Activated CD8-positive, alpha-beta T cell treated with anti-CD3 and anti-CD28 coated beads, Interleukin-2, amount 10 ng/mL, durations not matched to agents 7 days and 5 days (primary cell): ENCODE measurements at regions of chr5 and their contacts with region 1.

Region 1: DNA sequence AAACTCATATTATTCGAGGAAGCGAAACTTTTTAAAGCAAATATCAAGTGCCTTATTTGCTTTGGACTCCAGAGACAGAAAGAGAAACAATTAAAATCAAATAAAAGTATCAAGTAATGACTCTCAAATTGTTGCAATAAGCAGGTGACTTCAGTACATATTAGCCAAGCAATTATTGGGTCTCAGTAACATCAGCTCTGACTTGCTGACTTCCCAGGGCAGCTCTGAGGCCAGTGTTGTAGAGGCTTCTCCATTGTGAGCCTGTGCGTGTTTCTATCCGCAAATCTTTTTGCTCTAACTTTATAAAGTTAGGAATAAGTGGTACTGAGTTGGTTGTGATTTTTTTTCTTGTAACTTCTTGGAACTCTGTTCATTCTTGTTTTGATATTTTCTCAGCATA is 186.8 kb upstream of the PRLR start:
- DNase-seq: no peak
- ATAC-seq: no peak
- H3K4me3 Mint-ChIP-seq: no peak overlapping the region
- H3K27ac Mint-ChIP-seq: no peak overlapping the region
- H3K4me1 Mint-ChIP-seq: no peaks in the 10 kb centered on the region
- H3K27me3 Mint-ChIP-seq: no peaks in the 10 kb centered on the region

Region 2: DNA sequence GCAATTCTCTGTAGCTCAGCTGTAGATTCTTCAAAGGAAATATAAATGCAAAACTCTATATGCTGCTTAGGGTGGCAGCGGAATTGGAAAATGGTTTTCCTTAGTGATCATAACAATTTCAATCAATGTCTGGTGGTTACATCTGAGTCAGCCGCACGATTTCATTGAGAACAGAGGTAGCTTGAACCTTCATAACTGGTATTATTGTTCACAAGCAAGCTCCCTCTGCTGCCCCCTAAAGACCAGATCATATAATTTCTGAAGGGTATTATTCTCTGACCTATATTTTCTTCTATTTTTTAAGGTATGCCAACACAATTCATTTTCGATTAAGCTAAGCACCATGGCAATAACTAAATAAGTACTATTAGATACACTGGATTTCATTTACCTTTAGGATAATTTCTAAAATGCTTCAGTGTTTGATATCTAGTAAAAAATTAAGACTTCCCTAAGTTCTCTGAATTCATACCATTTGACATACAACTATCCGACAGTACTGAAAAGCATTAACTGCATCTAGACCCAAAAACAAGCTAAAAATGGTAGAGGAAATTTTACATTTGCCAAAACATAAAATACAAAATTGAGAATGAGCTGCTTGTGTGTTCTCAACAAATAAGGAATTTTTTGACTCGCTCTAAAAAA is 19.5 kb after region 1 on chr5:
- CTCF ChIA-PET with region 1: interaction called, 11 read pairs
- POLR2A ChIA-PET with region 1: no interaction called
- DNase-seq: peak; percentile 22
- ATAC-seq: no peak
- H3K4me3 Mint-ChIP-seq: no peak overlapping the region
- H3K27ac Mint-ChIP-seq: no peak overlapping the region
- H3K4me1 Mint-ChIP-seq: no peaks in the 10 kb centered on the region
- H3K27me3 Mint-ChIP-seq: peaks cover 29% of the 10 kb centered on the region